ENCODE measurements at regions of chr1 and their contacts with region 1.

Region 1: DNA sequence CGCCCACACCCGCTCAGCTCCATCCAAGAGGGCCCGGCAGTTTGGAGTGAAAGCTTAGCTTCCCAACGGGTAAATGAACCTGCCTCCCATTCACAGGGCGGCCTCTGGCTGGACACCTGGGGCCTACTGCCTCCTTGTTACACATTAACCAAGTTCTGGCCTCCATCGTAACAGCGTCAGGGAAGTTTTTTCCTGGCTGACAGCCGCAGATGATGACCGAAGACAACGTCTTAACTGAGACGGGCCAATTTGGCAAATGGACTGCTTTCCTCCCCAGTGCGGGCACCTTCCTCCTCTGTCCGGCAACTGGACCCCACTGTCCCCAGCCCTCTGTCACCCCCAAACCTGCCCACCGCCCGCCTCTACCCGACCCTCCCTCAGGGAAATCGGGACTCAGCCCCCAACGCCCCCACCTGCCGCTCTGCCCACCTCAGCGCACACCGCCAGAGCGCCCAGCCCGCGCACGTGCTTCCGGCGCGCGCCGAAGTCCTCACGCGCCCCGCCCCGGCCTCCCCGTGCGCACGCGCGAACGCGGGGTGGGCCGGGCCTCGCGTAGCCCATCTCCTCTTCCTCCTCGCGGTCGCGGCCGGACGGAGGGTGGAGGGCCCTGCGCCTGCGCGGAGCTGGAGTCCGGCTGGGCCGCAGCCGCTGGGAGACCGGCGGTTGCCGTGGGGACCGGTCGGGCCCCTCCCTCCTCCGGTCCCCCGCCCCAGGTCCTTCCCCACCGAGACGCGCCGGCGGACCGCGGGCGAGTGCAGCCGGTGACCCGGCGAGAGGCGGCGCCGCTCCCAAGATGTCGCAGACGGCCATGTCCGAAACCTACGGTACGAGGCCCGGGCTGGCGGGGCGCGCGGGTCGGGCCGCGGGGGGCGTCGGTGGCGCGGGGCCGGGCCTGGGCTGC is at the start of gene RAB4A:
- DNase-seq: peak; percentile 48 to 85 (median 75)
- ATAC-seq: peak; percentile 94
- H3K4me3 ChIP-seq: peak within 1 kb of the TSS; percentile 77
- H3K4me3 Mint-ChIP-seq: peak within 1 kb of the TSS; percentile 89 to 99 (median 94)
- H3K27ac ChIP-seq: peak within 1 kb of the TSS; percentile 62
- H3K27ac Mint-ChIP-seq: peak within 1 kb of the TSS; percentile 76 to 95 (median 89)
- H3K4me1 ChIP-seq: peaks cover 13 to 17% of the 10 kb centered on the region in 2 donors
- H3K4me1 Mint-ChIP-seq: peaks cover 25 to 45% (median 35%) of the 10 kb centered on the region in 7 donors
- H3K27me3 ChIP-seq: no peaks in the 10 kb centered on the region
- H3K27me3 Mint-ChIP-seq: no peaks in the 10 kb centered on the region
- total RNA-seq, gene RAB4A: 24.0 to 47.9 (median 36.9) TPM

Region 2: DNA sequence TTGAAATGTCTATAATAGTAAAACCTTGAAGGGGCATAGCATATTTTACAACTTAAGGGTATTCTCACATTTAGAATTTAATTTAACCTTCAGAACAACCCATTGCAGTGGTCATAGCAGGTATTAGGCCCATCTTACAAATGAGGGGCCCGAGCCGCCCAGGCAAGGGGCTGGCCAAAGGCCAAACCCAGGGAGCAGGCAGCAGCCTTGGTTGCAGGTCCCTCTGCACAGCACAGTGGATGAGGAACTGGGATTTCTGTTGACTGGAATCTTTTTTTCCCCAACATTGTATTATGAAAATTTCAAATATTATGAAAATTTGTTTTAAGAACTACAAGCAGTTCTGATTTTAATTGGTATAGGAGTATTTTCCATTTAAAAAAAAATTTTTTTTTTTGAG is 38.9 kb after region 1 on chr1:
- CTCF ChIA-PET with region 1: no interaction called
- POLR2A ChIA-PET with region 1: no interaction called
- intact Hi-C with region 1: loop called in 1 of 2 experiments (anchors 5 kb)
- DNase-seq: no peak
- ATAC-seq: no peak
- H3K4me3 ChIP-seq: no peak overlapping the region
- H3K4me3 Mint-ChIP-seq: no peak overlapping the region
- H3K27ac ChIP-seq: no peak overlapping the region
- H3K27ac Mint-ChIP-seq: no peak overlapping the region
- H3K4me1 ChIP-seq: no peaks in the 10 kb centered on the region
- H3K4me1 Mint-ChIP-seq: peaks cover 0 to 5% (median 0%) of the 10 kb centered on the region in 7 donors
- H3K27me3 ChIP-seq: no peaks in the 10 kb centered on the region
- H3K27me3 Mint-ChIP-seq: no peaks in the 10 kb centered on the region

Region 3: GRCh38 chr1:229440851-229441537 is 170.2 kb after region 1 on chr1:
- CTCF ChIA-PET with region 1: no interaction called
- POLR2A ChIA-PET with region 1: no interaction called
- intact Hi-C with region 1: loop called in 1 of 2 experiments (anchors 5 kb)
- DNase-seq: no peak
- ATAC-seq: no peak
- H3K4me3 ChIP-seq: no peak overlapping the region
- H3K4me3 Mint-ChIP-seq: peak overlapping the region in 1 of 10 donors; percentile 48
- H3K27ac ChIP-seq: no peak overlapping the region
- H3K27ac Mint-ChIP-seq: peak overlapping the region in 5 of 9 donors; percentile 8 to 71 (median 58)
- H3K4me1 ChIP-seq: no peaks in the 10 kb centered on the region
- H3K4me1 Mint-ChIP-seq: peaks cover 0 to 22% (median 0%) of the 10 kb centered on the region in 7 donors
- H3K27me3 ChIP-seq: no peaks in the 10 kb centered on the region
- H3K27me3 Mint-ChIP-seq: peaks cover 0 to 26% (median 0%) of the 10 kb centered on the region in 5 donors

Region 4: GRCh38 chr1:229558571-229559335 is 288.0 kb after region 1 on chr1 and contains the start of gene ABCB10:
- CTCF ChIA-PET with region 1: no interaction called
- POLR2A ChIA-PET with region 1: no interaction called
- intact Hi-C with region 1: loop called in 1 of 2 experiments (anchors 1 kb)
- DNase-seq: peak; percentile 68 to 96 (median 80)
- ATAC-seq: peak; percentile 85
- H3K4me3 ChIP-seq: peak within 1 kb of the TSS; percentile 88
- H3K4me3 Mint-ChIP-seq: peak within 1 kb of the TSS; percentile 91 to 97 (median 95)
- H3K27ac ChIP-seq: peak within 1 kb of the TSS; percentile 65
- H3K27ac Mint-ChIP-seq: peak within 1 kb of the TSS; percentile 64 to 92 (median 87)
- H3K4me1 ChIP-seq: peaks cover 15 to 16% of the 10 kb centered on the region in 2 donors
- H3K4me1 Mint-ChIP-seq: peaks cover 37 to 46% (median 41%) of the 10 kb centered on the region in 7 donors
- H3K27me3 ChIP-seq: no peaks in the 10 kb centered on the region
- H3K27me3 Mint-ChIP-seq: peaks cover 0 to 6% (median 0%) of the 10 kb centered on the region in 5 donors
- total RNA-seq, gene ABCB10: 14.1 to 31.9 (median 18.4) TPM

Region 5: DNA sequence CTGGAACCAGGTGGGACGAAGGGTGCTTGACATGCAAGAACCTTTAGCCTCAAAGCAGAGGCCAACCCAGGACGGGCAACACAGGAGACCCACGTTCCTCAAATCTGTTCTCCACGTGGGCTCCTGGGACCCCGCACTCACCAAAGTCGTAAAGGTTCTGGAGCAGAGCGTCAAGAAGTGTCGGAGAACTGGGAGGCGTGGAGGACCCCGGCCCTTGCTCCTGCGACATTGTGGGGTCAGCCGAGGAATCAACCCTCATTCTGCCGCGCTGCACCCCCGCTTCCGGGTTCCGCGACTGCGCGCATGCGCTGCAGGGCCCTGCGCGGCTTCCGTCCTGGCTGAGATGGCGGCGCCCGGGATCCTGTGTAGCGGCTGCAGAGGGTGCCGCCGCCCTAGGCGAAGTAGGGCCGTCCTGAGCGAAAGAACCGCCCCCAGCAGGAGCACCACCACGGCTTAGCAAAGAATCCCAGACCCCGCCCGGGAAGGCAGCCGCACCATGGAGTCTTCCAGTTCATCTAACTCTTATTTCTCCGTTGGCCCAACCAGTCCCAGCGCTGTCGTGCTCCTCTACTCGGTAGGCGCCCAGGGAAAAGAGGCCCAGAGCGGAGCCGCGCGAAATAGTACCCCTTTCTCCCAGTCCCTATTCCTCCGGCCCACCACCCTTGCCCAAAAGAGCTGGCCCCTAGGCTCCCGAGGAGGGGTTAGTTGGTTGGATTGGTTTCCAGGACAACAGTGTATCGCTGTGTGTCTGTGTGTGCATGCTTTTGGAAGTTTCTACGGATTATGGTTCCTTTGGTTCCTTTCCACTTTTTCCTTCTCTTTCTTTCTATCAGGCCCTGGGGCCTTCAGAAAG is 1970.3 kb after region 1 on chr1 and contains the start of gene GNPAT:
- CTCF ChIA-PET with region 1: no interaction called
- POLR2A ChIA-PET with region 1: no interaction called
- intact Hi-C with region 1: loop called in 1 of 2 experiments (anchors 10 kb)
- DNase-seq: peak; percentile 86 to 97 (median 92)
- ATAC-seq: peak; percentile 98
- H3K4me3 ChIP-seq: peak within 1 kb of the TSS; percentile 98
- H3K4me3 Mint-ChIP-seq: peak within 1 kb of the TSS; percentile 90 to 99 (median 95)
- H3K27ac ChIP-seq: peak within 1 kb of the TSS; percentile 93
- H3K27ac Mint-ChIP-seq: peak within 1 kb of the TSS; percentile 92 to 99 (median 97)
- H3K4me1 ChIP-seq: peaks cover 17 to 44% of the 10 kb centered on the region in 2 donors
- H3K4me1 Mint-ChIP-seq: peaks cover 47 to 86% (median 76%) of the 10 kb centered on the region in 7 donors
- H3K27me3 ChIP-seq: no peaks in the 10 kb centered on the region
- H3K27me3 Mint-ChIP-seq: no peaks in the 10 kb centered on the region
- total RNA-seq, gene GNPAT: 17.3 to 41.0 (median 35.5) TPM